PC-3 (cell line): ENCODE measurements at regions of chr6 and their contacts with region 1.

Region 1: DNA sequence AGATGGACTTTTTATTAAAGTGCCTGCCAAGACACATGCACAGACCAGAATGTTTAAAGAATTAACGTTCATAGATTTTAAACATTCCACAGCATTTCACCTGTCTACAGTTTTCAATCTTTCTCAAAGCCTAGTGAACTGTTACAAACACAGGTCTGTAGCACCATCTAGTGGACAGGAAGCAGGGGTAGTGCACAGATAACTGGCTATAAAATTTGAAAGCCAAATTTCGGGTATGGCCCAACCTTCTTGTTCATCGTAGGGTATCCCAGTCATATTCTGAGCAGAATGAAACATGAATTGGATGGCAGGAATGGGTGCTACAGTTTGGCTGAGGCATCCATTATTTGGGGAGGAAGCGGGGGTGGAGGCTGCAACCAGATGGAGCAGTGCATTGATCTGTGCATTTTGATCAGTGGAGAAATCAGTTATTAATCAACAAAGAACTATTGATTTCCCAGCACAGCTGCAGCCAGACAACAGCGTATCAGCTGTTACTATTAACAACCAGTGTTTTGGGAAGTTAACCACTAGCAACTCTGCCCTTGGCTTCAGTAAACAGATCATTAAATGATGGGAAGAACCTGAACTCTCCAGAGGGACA is 56.1 kb upstream of the B3GAT2 start:
- DNase-seq: peak; percentile 63
- ATAC-seq: peak; percentile 86
- H3K4me3 ChIP-seq: no peak overlapping the region
- H3K27ac ChIP-seq: no peak overlapping the region
- H3K4me1 ChIP-seq: no peaks in the 10 kb centered on the region
- H3K27me3 ChIP-seq: no peaks in the 10 kb centered on the region
- CTCF ChIP-seq: peak; percentile 81

Region 2: GRCh38 chr6:70210462-70210861 is 802.5 kb before region 1 on chr6:
- CTCF ChIA-PET with region 1: no interaction called
- POLR2A ChIA-PET with region 1: no interaction called
- intact Hi-C with region 1: loop called (anchors 1 kb)
- DNase-seq: peak; percentile 24
- ATAC-seq: peak; percentile 46; the same call in 1 of the 2 replicates
- H3K4me3 ChIP-seq: no peak overlapping the region
- H3K27ac ChIP-seq: no peak overlapping the region
- H3K4me1 ChIP-seq: no peaks in the 10 kb centered on the region
- H3K27me3 ChIP-seq: peaks cover 40% of the 10 kb centered on the region
- CTCF ChIP-seq: peak; percentile 44; the same call in 1 of the 2 replicates

Region 3: GRCh38 chr6:70310063-70310694 is 702.8 kb before region 1 on chr6:
- CTCF ChIA-PET with region 1: no interaction called
- POLR2A ChIA-PET with region 1: no interaction called
- intact Hi-C with region 1: loop called (anchors 2 kb)
- DNase-seq: peak; percentile 74
- ATAC-seq: no peak
- H3K4me3 ChIP-seq: no peak overlapping the region
- H3K27ac ChIP-seq: no peak overlapping the region
- H3K4me1 ChIP-seq: peaks cover 10% of the 10 kb centered on the region
- H3K27me3 ChIP-seq: peaks cover 32% of the 10 kb centered on the region
- CTCF ChIP-seq: peak; percentile 80

Region 4: DNA sequence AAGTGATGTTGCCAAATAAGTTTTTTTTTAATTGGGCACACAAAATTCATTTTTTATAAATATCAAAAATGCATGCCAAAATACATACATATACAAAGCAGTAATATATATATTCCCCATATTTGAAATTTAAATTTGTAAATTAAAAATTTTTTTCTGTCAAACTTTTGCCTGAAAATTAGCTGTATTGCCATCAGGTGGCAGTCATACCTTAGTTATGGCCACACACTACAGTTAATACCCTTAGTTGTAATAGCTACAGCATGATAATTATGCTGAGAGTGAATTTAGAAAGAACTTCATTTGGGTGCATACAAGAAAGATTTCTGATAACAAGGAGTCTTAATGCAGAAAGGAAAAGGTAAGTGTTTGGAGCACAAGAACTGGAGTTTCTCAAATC is 492.4 kb before region 1 on chr6:
- CTCF ChIA-PET with region 1: no interaction called
- POLR2A ChIA-PET with region 1: no interaction called
- intact Hi-C with region 1: loop called (anchors 10 kb)
- DNase-seq: peak; percentile 22
- ATAC-seq: peak; percentile 29; the same call in 1 of the 2 replicates
- H3K4me3 ChIP-seq: no peak overlapping the region
- H3K27ac ChIP-seq: no peak overlapping the region
- H3K4me1 ChIP-seq: no peaks in the 10 kb centered on the region
- H3K27me3 ChIP-seq: no peaks in the 10 kb centered on the region
- CTCF ChIP-seq: peak; percentile 55

Region 5: DNA sequence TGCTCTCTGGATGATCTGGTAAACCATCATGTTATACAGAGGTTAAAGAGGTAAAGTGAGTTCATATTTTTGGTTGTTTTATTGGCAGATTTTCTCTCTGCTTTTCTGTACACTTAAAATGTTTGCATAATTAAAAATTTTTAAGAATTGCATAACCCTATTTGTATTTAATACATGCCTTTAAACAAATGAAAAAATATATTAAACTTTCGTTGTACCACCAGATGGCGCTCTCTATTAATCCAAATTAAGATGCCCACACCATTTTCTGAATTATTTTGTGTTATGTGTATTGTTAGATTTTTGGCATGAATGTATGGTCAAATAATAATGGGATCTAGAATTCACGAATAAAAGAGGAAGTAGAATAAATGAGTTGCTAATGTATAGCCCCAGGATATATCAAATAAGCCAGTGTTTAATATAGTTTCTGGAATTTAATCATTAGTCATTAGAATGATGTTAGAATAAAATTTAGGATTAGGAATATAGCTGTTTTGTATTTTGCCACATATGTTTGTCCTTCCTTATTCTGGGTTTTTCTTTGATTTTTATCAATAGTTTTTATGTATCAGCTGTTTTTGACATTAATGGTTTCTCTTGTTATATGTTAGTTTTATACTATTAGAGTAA is 306.4 kb before region 1 on chr6:
- CTCF ChIA-PET with region 1: no interaction called
- POLR2A ChIA-PET with region 1: no interaction called
- intact Hi-C with region 1: loop called (anchors 1 kb)
- DNase-seq: peak; percentile 71
- ATAC-seq: no peak; the same call in 1 of the 2 replicates
- H3K4me3 ChIP-seq: no peak overlapping the region
- H3K27ac ChIP-seq: no peak overlapping the region
- H3K4me1 ChIP-seq: no peaks in the 10 kb centered on the region; the same call in 1 of the 2 replicates
- H3K27me3 ChIP-seq: no peaks in the 10 kb centered on the region
- CTCF ChIP-seq: peak; percentile 73

Region 6: GRCh38 chr6:70884074-70884983 is 128.6 kb before region 1 on chr6:
- CTCF ChIA-PET with region 1: no interaction called
- POLR2A ChIA-PET with region 1: no interaction called
- intact Hi-C with region 1: loop called (anchors 2 kb)
- DNase-seq: peak; percentile 63
- ATAC-seq: peak; percentile 74
- H3K4me3 ChIP-seq: no peak overlapping the region
- H3K27ac ChIP-seq: no peak overlapping the region
- H3K4me1 ChIP-seq: no peaks in the 10 kb centered on the region
- H3K27me3 ChIP-seq: no peaks in the 10 kb centered on the region
- CTCF ChIP-seq: peak; percentile 86

Region 7: GRCh38 chr6:70967049-70967448 is 45.9 kb before region 1 on chr6:
- CTCF ChIA-PET with region 1: no interaction called
- POLR2A ChIA-PET with region 1: no interaction called
- intact Hi-C with region 1: no loop called
- DNase-seq: no peak
- ATAC-seq: no peak
- H3K4me3 ChIP-seq: no peak overlapping the region
- H3K27ac ChIP-seq: no peak overlapping the region
- H3K4me1 ChIP-seq: no peaks in the 10 kb centered on the region
- H3K27me3 ChIP-seq: no peaks in the 10 kb centered on the region
- CTCF ChIP-seq: no peak

Region 8: DNA sequence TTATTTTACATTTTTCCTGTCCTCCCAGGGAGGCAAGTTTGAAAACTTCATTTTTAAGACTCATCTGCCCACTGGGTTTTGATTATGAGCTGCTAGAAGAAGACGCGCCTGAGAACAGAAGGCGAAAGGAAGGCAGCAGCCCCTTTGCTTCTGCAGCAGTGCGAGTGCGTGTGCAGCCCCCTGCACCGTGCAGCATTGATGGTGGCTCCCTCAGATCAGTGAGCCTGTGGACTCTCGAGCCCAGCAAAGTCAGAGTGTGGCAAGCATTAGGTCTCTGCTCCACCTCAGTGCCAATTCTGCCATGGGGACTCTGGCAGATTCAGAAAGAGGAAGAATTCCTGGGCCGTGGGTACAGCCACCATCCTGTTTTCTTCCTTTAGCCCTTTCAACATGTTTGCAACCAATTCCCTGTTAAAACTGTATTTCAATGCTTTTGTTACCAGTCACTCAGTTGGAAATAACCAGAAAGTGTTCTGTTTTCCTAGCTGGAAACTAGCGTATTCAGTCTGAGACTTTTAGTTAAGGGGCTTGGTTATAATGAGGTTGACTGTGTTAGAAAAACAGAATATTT is 140.9 kb after region 1 on chr6:
- CTCF ChIA-PET with region 1: no interaction called
- POLR2A ChIA-PET with region 1: no interaction called
- intact Hi-C with region 1: no loop called
- DNase-seq: no peak
- ATAC-seq: no peak
- H3K4me3 ChIP-seq: no peak overlapping the region
- H3K27ac ChIP-seq: no peak overlapping the region
- H3K4me1 ChIP-seq: no peaks in the 10 kb centered on the region
- H3K27me3 ChIP-seq: peaks cover 3% of the 10 kb centered on the region; the same call in 1 of the 2 replicates
- CTCF ChIP-seq: no peak